Posterior vena cava (tissue), 2 donors: ENCODE measurements at regions of chr16 and their contacts with region 1.

Region 1: GRCh38 chr16:7792346-7792745 is 459.7 kb downstream of the RBFOX1 start:
- DNase-seq: no peak

Region 2: DNA sequence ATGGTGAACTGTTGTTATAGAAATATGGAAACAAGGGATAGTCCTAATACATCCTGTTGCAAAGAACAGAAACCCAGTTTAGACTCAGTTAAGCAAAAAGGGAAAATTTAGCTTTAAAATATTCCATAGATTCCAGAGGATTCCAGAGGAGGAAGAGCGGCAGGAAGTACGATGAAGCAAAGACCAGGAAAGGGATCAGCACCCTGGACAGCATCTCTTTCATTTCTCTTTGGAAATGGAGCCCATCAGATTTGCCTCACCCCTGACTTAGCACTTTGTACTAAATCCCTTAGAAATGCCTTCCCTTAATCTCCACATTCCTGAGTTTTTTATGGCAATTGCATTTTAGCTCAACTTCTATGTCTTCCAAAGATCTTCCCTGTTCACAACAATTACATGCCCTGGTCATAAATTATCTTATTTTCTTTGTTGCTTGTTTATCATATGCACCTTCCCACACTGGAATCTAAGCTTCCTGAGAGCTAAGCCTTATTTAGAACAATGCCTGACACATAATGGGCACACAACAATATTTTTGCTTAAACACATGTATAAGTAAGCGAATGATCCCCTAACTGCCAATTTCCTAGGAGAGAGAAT is 609.7 kb before region 1 on chr16:
- intact Hi-C with region 1: loop called in 1 of 2 experiments (anchors 5 kb)
- DNase-seq: no peak